CD8-positive, alpha-beta T cell (primary cell): ENCODE measurements at regions of chr18 and their contacts with region 1.

Region 1: DNA sequence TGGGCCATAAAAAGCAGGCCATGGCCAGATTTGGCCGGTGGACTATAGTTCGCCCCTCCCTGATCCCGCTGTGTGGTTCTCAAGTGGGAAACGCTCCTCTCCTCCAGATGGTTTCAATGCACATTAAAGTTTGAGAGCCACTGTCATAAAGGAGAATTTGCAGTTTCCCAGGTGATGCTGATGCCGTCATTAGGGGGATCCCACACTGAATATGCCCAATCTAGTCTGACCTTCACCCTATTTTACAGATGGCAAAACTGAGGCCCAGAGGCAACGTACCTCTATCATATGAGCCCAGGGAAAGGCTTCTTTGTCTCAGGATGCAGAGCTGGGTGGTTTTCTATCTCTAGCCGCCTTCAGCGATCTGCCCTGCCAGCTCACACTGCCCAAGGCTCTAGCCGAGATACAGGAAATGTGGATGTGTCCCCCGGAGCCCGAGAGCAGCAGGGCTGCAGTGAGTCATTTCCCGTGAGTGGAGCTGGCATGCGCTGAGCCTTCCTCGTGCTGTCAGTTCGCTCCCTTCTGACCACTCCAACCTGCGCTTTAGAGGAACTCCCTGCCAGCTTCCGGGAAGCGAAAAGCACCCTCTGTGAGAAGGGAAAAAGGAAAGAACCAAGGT is 116.2 kb downstream of the SMAD7 start:
- DNase-seq: peak; percentile 28 to 92 (median 75)
- ATAC-seq: peak; percentile 76
- H3K4me3 ChIP-seq: peak overlapping the region; percentile 8 to 59
- H3K4me3 Mint-ChIP-seq: peak overlapping the region; percentile 82
- H3K27ac ChIP-seq: peak overlapping the region; percentile 36 to 90
- H3K27ac Mint-ChIP-seq: peak overlapping the region; percentile 89
- H3K4me1 ChIP-seq: peaks cover 68% of the 10 kb centered on the region
- H3K4me1 Mint-ChIP-seq: peaks cover 76% of the 10 kb centered on the region
- H3K27me3 ChIP-seq: no peaks in the 10 kb centered on the region
- H3K27me3 Mint-ChIP-seq: no peaks in the 10 kb centered on the region
- CTCF ChIP-seq: no peak

Region 2: GRCh38 chr18:48813833-48814489 is 20.6 kb before region 1 on chr18:
- CTCF ChIA-PET with region 1: interaction called, 6 read pairs
- POLR2A ChIA-PET with region 1: interaction called, 3 read pairs
- intact Hi-C with region 1: loop called in 1 of 2 experiments (anchors 1 kb)
- DNase-seq: peak in 8 of 9 experiments; percentile 23 to 93 (median 58)
- ATAC-seq: peak; percentile 70
- H3K4me3 ChIP-seq: no peak overlapping the region
- H3K4me3 Mint-ChIP-seq: peak overlapping the region; percentile 3
- H3K27ac ChIP-seq: peak overlapping the region; percentile 74 to 96
- H3K27ac Mint-ChIP-seq: peak overlapping the region; percentile 96
- H3K4me1 ChIP-seq: peaks cover 19% of the 10 kb centered on the region
- H3K4me1 Mint-ChIP-seq: peaks cover 35% of the 10 kb centered on the region
- H3K27me3 ChIP-seq: no peaks in the 10 kb centered on the region
- H3K27me3 Mint-ChIP-seq: no peaks in the 10 kb centered on the region
- CTCF ChIP-seq: no peak

Region 3: DNA sequence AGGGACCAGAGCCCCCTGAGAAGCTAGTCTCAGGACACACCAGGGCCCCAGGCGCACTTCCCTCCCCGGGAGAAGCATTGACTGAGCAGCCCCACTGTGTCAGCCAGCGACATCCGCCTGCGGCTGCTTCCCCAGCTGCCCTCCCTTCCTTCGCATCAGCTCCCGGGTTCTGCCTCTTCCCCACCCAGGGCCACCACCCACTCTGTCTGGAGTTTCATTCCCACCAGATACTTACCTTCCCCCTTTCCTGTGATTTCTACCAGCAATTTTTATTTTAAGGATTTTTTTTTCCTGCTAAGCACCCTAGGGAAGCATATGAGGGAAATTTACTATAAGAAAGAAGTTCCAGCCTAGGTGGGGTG is 17.1 kb after region 1 on chr18:
- CTCF ChIA-PET with region 1: interaction called, 3 read pairs
- POLR2A ChIA-PET with region 1: interaction called, 3 read pairs
- intact Hi-C with region 1: loop called in 1 of 2 experiments (anchors 2 kb)
- DNase-seq: peak in 3 of 9 experiments; percentile 18 to 41 (median 39)
- ATAC-seq: peak; percentile 57
- H3K4me3 ChIP-seq: no peak overlapping the region
- H3K4me3 Mint-ChIP-seq: no peak overlapping the region
- H3K27ac ChIP-seq: no peak overlapping the region
- H3K27ac Mint-ChIP-seq: no peak overlapping the region
- H3K4me1 ChIP-seq: peaks cover 12% of the 10 kb centered on the region
- H3K4me1 Mint-ChIP-seq: peaks cover 34% of the 10 kb centered on the region
- H3K27me3 ChIP-seq: no peaks in the 10 kb centered on the region
- H3K27me3 Mint-ChIP-seq: no peaks in the 10 kb centered on the region
- CTCF ChIP-seq: no peak